Endothelial cell of umbilical vein (primary cell): ENCODE measurements at regions of chr1 and their contacts with region 1.

Region 1: DNA sequence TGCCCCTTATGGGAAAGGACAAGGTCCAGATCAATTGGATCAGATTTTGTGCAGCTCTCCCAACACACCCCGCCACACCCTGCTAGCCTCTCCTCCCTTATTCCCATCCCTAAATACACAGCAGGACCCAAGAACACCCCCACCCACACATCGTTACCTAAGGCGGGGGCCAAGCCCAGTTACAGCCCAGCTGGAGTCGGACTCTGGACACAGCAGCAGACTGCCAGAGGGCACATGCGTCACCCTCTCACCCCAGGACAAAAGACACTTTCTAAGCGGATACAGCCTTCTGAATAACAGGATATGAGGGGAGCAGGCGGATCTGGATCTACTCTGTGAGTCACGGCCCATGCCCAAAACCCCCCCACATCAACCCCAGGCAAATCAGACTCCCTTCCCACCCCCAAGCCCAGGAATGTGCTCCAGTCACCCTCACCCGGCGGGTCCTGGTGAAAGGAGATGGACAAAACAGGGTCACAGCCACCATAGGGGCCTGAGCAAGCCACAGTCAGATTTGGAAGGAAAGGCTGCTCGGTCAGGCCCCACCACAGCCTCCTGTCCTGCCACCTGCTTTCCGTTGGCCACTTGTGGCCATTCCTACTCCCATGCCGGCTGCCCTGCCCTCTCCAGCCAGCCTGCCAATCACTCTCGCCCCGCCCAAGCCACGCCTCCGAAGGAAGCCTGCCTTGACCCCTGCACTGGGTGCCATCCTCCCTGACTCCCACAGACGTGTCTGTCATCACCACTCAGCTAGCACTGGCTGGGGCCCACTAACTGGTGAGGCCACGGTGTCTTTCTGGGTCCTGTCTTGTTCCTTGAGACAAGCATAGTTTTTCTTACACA is 4.0 kb downstream of the S100A16 start:
- DNase-seq: peak; percentile 98
- H3K4me3 ChIP-seq: peak overlapping the region; percentile 2 to 87 (median 86)
- H3K27ac ChIP-seq: peak overlapping the region; percentile 98
- H3K4me1 ChIP-seq: peaks cover 40% of the 10 kb centered on the region
- H3K27me3 ChIP-seq: no peaks in the 10 kb centered on the region
- CTCF ChIP-seq: no peak
- POLR2A ChIP-seq: peak; percentile 93

Region 2: GRCh38 chr1:153566440-153567379 is 42.3 kb before region 1 on chr1:
- CTCF ChIA-PET with region 1: interaction called, 121 read pairs
- POLR2A ChIA-PET with region 1: interaction called, 4 read pairs
- dilution Hi-C with region 1: no loop called
- intact Hi-C with region 1: loop called (anchors 1 kb)
- DNase-seq: peak; percentile 96
- H3K4me3 ChIP-seq: no peak overlapping the region
- H3K27ac ChIP-seq: peak overlapping the region; percentile 99
- H3K4me1 ChIP-seq: peaks cover 34% of the 10 kb centered on the region
- H3K27me3 ChIP-seq: no peaks in the 10 kb centered on the region
- CTCF ChIP-seq: no peak
- POLR2A ChIP-seq: no peak

Region 3: DNA sequence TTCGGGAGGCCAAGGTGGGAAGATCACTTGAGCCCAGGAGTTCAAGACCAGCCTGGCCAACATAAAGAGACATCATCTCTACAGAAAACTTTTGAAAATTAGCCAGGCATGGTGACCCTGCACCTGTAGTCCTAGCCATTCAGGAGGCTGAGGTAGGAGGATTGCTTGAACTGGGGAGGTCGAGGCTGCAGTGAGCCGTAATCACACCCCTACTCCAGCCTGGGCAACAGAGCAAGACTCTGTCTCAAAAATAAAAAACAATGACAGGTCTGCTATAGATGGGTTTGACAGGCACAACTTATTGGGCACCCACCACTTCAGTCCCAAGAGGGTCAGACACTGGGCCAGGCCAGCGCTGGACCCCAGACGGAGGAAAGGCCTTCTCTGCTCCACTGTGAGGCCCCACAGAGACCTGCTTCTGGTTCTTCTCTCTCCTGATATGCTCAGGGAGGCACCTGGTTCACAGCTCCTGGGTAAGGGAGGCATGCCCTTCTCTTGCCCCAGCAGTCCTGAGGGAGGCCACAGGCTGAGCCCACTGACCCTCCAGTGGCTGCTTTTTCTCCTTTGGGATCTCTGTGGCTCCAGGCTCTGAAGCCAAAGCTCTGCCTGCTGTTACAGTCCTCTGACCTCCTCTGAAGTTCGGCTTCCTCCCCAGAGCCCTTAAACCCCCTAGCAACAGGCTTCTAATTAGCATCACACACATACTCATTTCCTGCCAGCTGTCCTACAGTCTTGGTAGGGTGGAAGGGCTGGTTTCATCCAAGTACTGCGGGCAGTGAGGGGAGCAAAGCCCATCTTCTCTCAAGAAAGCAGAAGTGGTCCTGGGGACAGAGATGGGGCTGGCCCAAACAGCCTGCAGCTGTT is 10.4 kb before region 1 on chr1:
- CTCF ChIA-PET with region 1: interaction called, 5 read pairs
- POLR2A ChIA-PET with region 1: interaction called, 9 read pairs
- dilution Hi-C with region 1: no loop called
- intact Hi-C with region 1: loop called (anchors 1 kb)
- DNase-seq: peak; percentile 78
- H3K4me3 ChIP-seq: no peak overlapping the region
- H3K27ac ChIP-seq: peak overlapping the region; percentile 54
- H3K4me1 ChIP-seq: peaks cover 14% of the 10 kb centered on the region
- H3K27me3 ChIP-seq: no peaks in the 10 kb centered on the region
- CTCF ChIP-seq: no peak
- POLR2A ChIP-seq: no peak

Region 4: GRCh38 chr1:153626922-153627796 is 18.2 kb after region 1 on chr1 and contains the start of gene S100A13:
- CTCF ChIA-PET with region 1: interaction called, 42 read pairs
- POLR2A ChIA-PET with region 1: interaction called, 43 read pairs
- dilution Hi-C with region 1: no loop called
- intact Hi-C with region 1: loop called (anchors 1 kb)
- DNase-seq: peak; percentile 90
- H3K4me3 ChIP-seq: peak within 1 kb of the TSS; percentile 57 to 74 (median 62)
- H3K27ac ChIP-seq: peak within 1 kb of the TSS; percentile 81
- H3K4me1 ChIP-seq: peaks cover 14% of the 10 kb centered on the region
- H3K27me3 ChIP-seq: no peaks in the 10 kb centered on the region
- CTCF ChIP-seq: peak; percentile 93
- POLR2A ChIP-seq: peak; percentile 98
- total RNA-seq, gene S100A13: 155 and 255 TPM in 2 replicates

Region 5: DNA sequence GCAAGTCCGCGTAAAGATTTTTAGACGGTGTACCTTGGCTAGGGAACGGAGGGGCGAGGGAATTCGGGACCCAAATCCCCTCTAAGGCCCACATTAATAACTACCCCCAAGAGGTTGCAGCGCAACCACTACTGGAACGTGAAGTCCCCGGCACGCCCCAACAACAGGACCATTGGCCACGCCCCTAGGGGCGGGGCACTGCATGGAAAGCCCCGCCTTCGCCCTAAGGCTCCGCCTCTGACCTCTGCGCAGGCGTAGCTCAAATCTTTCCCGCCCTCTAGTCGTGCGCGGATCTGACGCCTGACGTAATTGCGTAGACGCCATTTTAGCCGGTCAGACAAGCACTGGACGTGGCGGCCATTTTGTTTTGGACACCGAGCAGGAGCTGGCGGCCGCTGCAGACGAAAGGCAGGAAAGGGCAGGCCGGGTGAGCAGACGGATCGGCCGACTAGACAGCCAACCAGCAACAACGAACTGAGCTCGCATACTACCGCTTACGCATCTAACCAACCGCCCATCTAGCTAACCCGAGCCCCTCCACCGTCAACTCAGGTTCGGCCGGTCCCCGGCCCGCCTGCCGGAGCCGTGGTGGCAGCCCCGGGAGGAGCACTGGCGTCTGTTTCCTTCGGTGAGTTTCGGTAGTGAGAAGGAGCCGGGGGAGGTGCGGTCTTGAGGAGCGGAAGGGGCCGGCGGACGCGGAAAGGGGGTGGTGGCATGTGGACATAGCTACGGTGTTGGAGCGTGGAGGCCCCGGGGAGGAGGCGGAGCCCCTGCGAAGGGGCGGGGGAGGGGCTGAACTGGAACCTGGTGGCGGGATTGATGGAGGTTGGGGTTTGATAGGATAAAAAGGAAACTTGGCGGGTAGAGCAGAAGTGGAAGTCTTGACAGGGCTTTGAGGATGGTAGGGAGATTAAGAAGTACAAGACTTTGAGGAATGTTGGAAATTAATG is 25.0 kb after region 1 on chr1 and contains the start of gene CHTOP:
- CTCF ChIA-PET with region 1: interaction called, 42 read pairs
- POLR2A ChIA-PET with region 1: interaction called, 43 read pairs
- dilution Hi-C with region 1: no loop called
- intact Hi-C with region 1: loop called (anchors 1 kb)
- DNase-seq: peak; percentile 100
- H3K4me3 ChIP-seq: peak within 1 kb of the TSS; percentile 65 to 96 (median 93)
- H3K27ac ChIP-seq: peak within 1 kb of the TSS; percentile 94
- H3K4me1 ChIP-seq: peaks cover 11% of the 10 kb centered on the region
- H3K27me3 ChIP-seq: no peaks in the 10 kb centered on the region
- CTCF ChIP-seq: no peak
- POLR2A ChIP-seq: peak; percentile 78
- total RNA-seq, gene CHTOP: 72.1 and 74.4 TPM in 2 replicates

Region 6: DNA sequence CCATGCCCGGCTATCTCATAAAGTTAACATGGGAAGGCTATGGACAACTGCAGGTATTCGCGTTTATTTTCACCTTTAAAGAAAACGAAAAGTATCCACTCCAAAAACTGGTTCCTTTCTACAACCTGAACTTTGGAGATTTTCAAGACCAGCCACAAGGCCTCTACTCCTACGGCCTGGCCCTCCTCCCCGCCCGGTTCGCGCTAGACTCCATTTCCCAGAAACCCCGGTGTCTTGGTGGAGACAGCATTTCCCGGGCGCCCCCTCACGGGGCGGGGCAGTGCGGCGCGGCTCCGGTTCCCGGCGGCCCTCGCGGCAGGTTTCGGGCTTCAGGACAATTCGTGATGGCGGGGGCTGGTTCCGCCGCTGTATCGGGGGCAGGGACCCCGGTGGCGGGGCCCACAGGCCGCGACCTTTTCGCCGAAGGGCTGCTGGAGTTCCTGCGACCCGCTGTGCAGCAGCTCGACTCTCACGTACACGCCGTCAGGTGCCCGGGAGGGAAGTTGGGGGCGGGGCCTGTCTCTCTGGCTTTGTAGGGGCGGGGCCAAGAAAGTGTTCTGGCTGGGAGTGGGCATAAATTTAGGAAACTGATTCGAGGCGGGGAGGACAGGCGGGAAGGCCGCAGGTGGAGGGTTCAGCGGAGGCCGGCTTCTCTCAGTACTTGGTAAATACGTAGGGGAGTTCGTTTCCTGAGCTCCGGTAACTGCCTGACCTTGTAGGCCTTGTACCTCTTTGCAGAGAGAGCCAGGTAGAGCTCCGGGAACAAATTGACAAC is 49.6 kb after region 1 on chr1 and contains the start of gene SNAPIN:
- CTCF ChIA-PET with region 1: no interaction called
- POLR2A ChIA-PET with region 1: interaction called, 3 read pairs
- dilution Hi-C with region 1: no loop called
- intact Hi-C with region 1: loop called (anchors 1 kb)
- DNase-seq: peak; percentile 83
- H3K4me3 ChIP-seq: peak within 1 kb of the TSS; percentile 79 to 91 (median 83)
- H3K27ac ChIP-seq: peak within 1 kb of the TSS; percentile 64
- H3K4me1 ChIP-seq: peaks cover 7% of the 10 kb centered on the region
- H3K27me3 ChIP-seq: no peaks in the 10 kb centered on the region
- CTCF ChIP-seq: peak in 1 of 2 donors; percentile 21
- POLR2A ChIP-seq: peak; percentile 82
- total RNA-seq, gene SNAPIN: 36.5 and 36.8 TPM in 2 replicates

Region 7: GRCh38 chr1:153763365-153764225 is 154.6 kb after region 1 on chr1:
- CTCF ChIA-PET with region 1: no interaction called
- POLR2A ChIA-PET with region 1: no interaction called
- dilution Hi-C with region 1: no loop called
- intact Hi-C with region 1: no loop called
- DNase-seq: peak; percentile 87
- H3K4me3 ChIP-seq: no peak overlapping the region
- H3K27ac ChIP-seq: peak overlapping the region; percentile 39
- H3K4me1 ChIP-seq: peaks cover 22% of the 10 kb centered on the region
- H3K27me3 ChIP-seq: no peaks in the 10 kb centered on the region
- CTCF ChIP-seq: no peak
- POLR2A ChIP-seq: peak; percentile 43